Activated naive CD8-positive, alpha-beta T cell treated with anti-CD3 and anti-CD28 coated beads, Interleukin-2, amount 10 ng/mL, durations not matched to agents 7 days and 5 days (primary cell): ENCODE measurements at regions of chr1 and their contacts with region 1.

Region 1: DNA sequence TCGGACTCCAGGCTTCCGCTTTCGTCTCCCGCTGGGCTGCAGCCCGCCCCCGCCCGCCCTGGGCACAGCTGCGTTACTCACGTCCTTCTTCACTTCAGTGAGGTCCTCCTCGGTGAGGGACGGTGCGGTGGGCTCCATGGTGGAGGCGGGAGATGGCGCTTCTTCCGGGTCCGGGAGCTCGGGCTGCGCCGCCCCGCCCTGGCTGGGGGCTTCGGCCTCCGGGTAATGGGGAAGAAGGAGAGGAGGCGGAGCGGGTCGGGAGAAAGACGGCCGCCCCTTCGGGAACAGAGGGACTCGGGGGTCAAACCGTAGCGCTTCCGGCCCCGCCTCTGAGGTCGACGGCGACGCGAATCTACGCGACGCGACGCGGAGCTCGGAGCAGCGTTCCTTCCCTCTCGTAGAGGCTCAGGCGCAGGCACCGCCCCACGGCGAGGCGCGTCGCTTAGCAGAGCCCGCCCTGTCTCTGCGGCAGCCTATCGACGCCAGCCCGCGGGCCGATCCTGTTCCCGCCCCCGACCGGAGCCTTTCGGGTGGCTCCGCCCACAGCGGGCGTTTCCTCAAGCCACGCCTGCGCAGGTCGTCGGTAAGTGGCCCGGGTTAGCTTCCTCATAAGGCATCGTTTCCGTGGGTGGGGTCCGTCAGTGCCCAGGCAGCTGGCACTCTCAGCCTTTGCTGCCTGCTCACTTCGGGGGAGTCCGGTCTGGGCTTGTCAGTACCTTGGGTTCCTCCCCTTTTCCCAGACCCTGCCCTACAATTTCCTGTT is at the start of gene BCL10:
- DNase-seq: peak; percentile 97
- ATAC-seq: peak; percentile 99
- H3K4me3 Mint-ChIP-seq: peak within 1 kb of the TSS; percentile 87
- H3K27ac Mint-ChIP-seq: peak within 1 kb of the TSS; percentile 92
- H3K4me1 Mint-ChIP-seq: peaks cover 31% of the 10 kb centered on the region
- H3K27me3 Mint-ChIP-seq: peaks cover 9% of the 10 kb centered on the region
- total RNA-seq, gene BCL10: 27.4 to 31.7 TPM

Region 2: DNA sequence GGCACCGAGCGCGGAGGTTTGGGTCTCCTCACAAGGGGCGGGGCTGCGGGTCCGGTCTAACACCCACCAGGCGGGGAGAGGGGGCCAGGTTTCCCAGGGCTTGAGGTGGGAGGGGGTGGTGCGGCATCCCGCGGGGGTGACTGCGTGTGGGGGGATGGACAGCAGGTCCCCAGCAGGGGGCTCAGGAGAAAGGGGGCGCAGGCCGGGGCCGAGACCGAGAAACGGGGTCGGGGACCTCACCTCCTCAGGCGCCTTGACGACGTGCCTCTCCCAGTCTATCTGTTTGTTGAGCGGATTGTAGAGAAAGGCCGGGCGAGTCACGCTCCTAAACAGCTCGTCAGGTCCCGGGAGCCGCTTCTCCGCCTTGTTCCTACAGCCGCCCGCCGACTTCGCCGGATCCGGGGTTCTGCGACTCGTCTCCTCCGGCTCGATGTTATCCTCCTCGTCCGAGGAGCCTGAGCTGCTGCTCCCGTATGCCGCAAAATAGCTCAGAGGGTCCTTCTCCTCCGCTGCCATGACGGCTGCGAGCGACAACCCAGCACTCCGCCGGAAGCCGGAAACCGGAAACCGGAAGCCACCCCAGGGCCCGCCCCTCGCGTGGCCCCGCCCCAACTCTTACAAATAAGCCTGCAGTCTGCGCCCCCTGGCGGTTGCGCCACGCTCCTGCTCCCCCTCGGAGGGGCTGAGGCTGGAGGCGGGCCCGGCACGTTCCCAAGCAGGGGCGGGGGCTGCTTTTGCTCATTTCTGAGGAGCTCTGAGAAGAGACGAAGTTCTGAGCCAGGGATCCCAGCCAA is 17.1 kb before region 1 on chr1 and contains the start of gene C1orf52:
- POLR2A ChIA-PET with region 1: interaction called, 33 read pairs
- DNase-seq: peak; percentile 98
- ATAC-seq: peak; percentile 91
- H3K4me3 Mint-ChIP-seq: peak within 1 kb of the TSS; percentile 97
- H3K27ac Mint-ChIP-seq: peak within 1 kb of the TSS; percentile 98
- H3K4me1 Mint-ChIP-seq: peaks cover 25% of the 10 kb centered on the region
- H3K27me3 Mint-ChIP-seq: no peaks in the 10 kb centered on the region
- total RNA-seq, gene C1orf52: 31.2 to 35.7 TPM

Region 3: DNA sequence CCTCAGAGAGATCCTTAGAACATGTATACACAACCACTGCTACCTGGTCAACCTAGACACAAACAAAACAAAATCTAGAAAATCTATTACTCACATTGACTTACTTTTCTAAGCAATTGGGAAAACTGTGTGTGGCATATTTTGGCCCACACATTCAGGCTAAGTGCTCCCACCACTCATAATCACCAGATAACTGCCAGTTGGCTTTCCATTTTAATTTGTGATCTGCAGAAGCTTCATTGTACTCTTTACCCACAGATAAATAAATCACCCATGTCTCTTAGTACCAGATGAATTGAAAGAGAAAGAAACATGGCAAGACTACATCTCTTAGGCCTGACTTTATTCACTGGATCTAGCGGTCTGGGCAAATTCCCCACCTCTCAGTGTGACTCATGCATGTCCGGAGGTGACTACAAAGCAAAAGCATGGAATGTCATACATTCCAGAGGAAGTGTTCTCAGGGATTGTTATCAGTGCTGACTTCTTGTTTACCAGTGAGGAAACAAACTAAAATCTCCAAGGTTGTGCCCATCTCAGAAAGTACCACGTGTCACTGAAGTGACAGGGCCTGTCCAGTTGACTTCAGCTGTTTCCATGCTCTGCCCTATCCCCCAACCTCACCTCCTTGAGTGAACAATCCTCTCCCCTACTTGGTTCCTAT is 52.4 kb after region 1 on chr1:
- POLR2A ChIA-PET with region 1: no interaction called
- DNase-seq: no peak
- ATAC-seq: no peak
- H3K4me3 Mint-ChIP-seq: no peak overlapping the region
- H3K27ac Mint-ChIP-seq: no peak overlapping the region
- H3K4me1 Mint-ChIP-seq: no peaks in the 10 kb centered on the region
- H3K27me3 Mint-ChIP-seq: peaks cover 27% of the 10 kb centered on the region

Region 4: DNA sequence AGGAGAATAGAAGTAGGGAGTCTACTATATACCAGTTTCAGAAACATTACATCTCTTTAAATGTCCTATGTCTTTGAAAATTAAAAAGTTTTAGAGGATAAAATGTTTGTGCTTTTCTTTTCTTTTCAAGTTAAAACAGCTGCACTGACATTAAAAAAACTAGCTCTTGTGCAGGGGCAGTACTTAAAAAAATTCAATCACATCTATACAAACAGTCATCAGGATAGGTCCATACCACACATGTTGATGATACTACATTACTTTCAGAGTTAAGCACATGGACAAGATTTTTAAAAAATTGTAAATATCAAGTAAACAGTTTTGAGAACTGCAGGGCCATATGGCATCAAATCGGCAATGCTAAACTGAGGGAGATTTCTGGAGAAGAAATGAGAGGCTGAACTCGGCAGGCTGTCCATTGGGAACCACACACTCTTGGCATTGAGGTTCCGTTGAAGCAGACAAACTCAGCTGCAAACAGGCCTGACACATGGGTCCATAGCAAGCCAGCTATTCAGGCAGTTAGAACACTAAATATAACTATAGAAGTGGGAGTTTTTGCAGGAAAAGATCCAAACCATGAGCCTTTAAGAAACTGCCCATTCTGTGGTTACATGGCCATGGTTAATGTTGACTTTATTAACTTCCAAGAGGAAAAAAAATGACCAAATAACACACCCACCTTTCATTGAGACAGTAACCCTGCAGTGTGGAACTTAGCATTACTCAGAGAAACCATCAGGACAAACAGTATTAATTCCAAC is 84.5 kb after region 1 on chr1:
- POLR2A ChIA-PET with region 1: no interaction called
- DNase-seq: no peak
- ATAC-seq: no peak
- H3K4me3 Mint-ChIP-seq: no peak overlapping the region
- H3K27ac Mint-ChIP-seq: no peak overlapping the region
- H3K4me1 Mint-ChIP-seq: no peaks in the 10 kb centered on the region
- H3K27me3 Mint-ChIP-seq: peaks cover 5% of the 10 kb centered on the region